ENCODE measurements at regions of chr6 and their contacts with region 1.

Region 1: GRCh38 chr6:123802697-123803496 is 768 bp upstream of the NKAIN2 start:
- DNase-seq: peak; percentile 85
- ATAC-seq: peak; percentile 99

Region 2: DNA sequence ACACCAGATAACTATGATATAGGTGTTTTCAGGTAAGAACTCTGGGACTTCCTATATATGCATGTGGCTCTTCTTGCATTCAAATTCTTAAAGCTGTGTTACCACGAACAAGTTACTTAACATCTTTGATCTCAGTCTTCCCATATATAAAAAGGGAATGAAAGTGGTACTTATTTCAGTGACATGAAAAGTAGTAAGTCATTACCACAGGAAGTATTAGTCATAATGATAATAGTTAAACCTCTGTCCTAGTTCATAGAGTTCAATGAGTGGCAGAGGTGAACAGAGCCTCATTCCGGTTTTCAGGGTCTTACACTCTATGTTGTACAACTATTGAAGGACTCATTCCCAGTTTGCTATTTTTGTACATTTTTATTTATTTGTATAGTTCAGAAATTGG is 237.8 kb after region 1 on chr6:
- intact Hi-C with region 1: loop called (anchors 10 kb)
- DNase-seq: no peak
- ATAC-seq: no peak

Region 3: DNA sequence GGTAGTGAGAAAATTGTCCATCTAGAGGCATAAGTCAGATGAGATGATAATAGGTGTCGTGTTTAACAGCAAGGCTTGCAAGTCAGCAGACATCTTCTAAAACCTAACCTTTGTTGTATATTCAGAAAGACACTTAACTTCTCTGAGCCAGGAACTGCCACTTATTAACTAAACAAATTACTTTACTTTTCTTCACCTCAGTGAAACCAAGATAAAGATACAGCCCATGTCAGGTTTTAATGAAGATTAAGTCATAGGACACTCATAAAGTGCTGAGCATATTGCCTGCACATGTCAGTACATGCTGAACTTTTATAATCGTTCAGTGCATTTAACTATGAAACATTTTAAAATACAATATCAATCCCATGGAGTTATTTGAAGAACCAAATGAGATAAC is 287.6 kb after region 1 on chr6:
- intact Hi-C with region 1: no loop called
- DNase-seq: no peak
- ATAC-seq: no peak

Region 4: DNA sequence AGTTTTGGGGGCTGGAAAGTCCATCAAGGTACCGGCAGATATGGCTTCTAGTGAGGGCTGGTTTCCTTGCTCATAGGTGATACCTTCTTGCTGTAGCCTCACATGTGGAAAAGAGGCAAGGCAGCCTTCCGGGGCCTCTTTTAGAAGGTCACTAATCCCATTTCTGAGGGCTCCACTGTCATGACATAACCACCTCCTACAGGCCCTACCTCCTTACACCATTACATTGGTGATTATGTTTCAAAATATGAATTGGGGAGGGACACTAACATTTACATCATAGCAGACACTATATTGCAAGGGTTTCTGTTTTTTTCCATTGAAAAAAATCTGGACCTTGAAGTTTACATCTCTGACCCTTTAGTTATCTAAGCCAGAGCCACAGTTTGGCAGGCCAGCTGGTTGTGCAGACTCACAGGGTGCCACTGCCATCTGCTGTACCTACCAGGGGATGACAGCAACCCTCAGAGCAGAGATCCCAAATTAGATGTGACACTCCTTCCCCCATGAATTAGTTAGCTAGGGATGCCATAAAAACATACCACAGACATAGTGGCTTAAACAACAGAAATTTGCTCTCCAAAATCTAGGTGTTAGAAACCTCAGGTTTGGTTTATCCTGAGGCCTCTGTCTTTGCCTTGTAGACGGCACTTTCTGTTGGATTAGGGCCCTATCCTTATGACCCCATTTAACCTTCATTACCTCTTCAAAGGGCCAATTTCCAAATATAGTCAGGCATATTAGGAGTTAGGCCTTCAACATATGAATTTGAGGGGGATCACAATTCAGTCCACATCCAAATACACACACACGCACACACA is 993.0 kb after region 1 on chr6:
- intact Hi-C with region 1: loop called (anchors 10 kb)
- DNase-seq: peak; percentile 42
- ATAC-seq: peak; percentile 86